ENCODE measurements at regions of chr7 and their contacts with region 1.

Region 1: DNA sequence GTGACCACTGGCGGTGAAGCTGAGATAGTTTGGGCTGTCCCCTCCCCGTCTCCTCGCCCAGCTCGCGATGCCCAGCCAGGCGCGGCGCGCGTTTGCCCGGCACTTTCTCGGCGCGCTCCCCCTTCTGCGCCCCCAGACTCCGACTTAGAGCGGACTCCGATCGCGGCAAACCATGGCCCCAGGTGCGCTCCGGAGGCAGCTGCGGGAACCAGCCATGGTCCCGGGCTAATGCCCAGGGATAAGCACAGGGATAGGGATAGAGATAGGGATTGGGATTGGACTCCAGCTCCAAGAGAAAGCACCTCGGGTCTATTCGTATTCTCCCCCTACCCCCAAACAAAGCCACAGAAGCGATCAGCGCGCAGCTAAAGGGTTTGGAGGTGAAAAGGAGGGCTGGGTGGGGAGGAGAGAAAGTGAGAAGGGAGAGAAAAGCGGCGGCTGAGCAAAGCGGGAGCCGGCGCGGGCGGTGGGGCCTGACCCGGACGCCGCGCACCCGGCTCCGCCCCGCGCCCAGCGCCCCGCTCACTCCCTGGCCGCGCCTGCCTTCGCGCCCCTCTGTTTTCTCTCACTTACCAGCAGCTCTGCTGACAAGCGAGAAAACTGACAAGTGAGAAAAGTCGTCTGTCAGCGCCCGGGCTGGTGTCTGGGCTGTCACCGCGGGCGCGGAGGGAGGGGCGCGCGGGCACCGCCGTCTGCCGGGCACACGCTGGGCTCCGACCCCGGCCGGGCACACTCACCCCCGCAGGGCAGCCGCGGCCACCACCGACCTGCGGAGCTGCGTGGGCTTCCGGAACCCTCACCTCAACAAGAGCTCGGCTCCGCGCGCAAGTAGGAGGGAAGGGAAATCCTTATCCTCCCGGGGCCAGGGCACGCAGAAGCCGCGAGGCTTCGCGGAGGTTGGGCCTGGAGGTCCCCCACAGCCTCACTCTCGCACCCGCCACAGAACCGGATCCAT is at the start of gene PDE1C:
- DNase-seq: peak; percentile 78 to 90 (median 81)
- ATAC-seq: peak; percentile 62 to 91 (median 82)
- H3K4me3 ChIP-seq: peak within 1 kb of the TSS; percentile 42 to 80 (median 64)
- H3K27ac ChIP-seq: peak within 1 kb of the TSS; percentile 78 to 97 (median 92)
- H3K4me1 ChIP-seq: peaks cover 0 to 42% (median 8%) of the 10 kb centered on the region in 12 donors
- H3K27me3 ChIP-seq: peaks cover 0 to 23% (median 0%) of the 10 kb centered on the region in 9 donors
- CTCF ChIP-seq: no peak
- POLR2A ChIP-seq: peak in 1 of 2 donors; percentile 43
- total RNA-seq, gene PDE1C: 63.7 to 307 (median 143) TPM

Region 2: GRCh38 chr7:31883761-31884164 is 186.9 kb before region 1 on chr7:
- intact Hi-C with region 1: loop called in 3 of 10 experiments (anchors 5 to 10 kb)
- DNase-seq: peak in 2 of 5 donors; percentile 37
- ATAC-seq: peak; percentile 19 to 69 (median 59)
- H3K4me3 ChIP-seq: no peak overlapping the region
- H3K27ac ChIP-seq: peak overlapping the region; percentile 67 to 87 (median 82)
- H3K4me1 ChIP-seq: peaks cover 12 to 59% (median 27%) of the 10 kb centered on the region in 12 donors
- H3K27me3 ChIP-seq: no peaks in the 10 kb centered on the region
- CTCF ChIP-seq: no peak
- POLR2A ChIP-seq: no peak

Region 3: GRCh38 chr7:32119790-32120196 is 49.1 kb after region 1 on chr7:
- intact Hi-C with region 1: no loop called
- DNase-seq: peak in 4 of 5 donors; percentile 10 to 56 (median 37)
- ATAC-seq: peak in 2 of 4 donors; percentile 31 to 50
- H3K4me3 ChIP-seq: no peak overlapping the region
- H3K27ac ChIP-seq: no peak overlapping the region
- H3K4me1 ChIP-seq: peaks cover 0 to 14% (median 2%) of the 10 kb centered on the region in 12 donors
- H3K27me3 ChIP-seq: no peaks in the 10 kb centered on the region
- CTCF ChIP-seq: no peak
- POLR2A ChIP-seq: no peak